Panc1 (cell line): ENCODE measurements at regions of chr5 and their contacts with region 1.

Region 1: DNA sequence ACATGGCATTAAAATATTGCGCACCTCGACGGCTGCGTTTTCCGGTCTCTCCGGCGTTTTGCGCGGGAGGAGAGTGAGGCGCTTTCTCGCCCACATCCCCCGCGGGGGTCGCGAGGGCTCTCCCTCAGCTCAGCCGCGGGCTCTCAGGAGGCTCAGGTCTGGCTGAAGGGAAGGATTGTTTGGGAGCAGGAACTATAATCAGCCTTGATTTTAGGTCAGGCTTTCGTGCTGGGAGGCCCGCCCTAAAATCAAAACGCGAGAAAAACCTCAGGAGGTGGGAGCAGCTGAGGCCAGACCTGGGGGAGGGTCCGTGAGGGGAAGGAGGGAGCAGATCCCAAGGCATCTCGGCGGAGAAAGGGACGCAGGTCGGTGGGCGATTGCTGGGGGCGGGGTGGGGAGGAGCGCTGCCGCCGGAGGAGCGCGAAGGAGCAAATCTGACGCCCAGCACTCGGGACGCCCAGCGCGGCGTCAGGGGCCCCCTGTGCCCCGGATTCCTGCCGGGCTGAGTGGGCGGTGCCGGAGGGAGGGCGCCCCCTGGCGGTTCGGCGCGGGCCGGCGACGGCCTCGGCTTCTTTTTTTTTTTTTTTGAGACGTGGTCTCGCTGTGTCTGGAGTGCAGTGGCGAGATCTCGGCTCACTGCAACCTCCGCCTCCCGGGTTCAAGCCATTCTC is 18.7 kb upstream of the RNF130 start:
- DNase-seq: no peak
- ATAC-seq: peak; percentile 89
- H3K4me3 ChIP-seq: peak overlapping the region; percentile 51 to 69
- H3K27ac ChIP-seq: peak overlapping the region; percentile 75
- H3K4me1 ChIP-seq: peaks cover 6% of the 10 kb centered on the region; the same call in 1 of the 2 replicates
- H3K27me3 ChIP-seq: no peaks in the 10 kb centered on the region
- CTCF ChIP-seq: peak; percentile 97

Region 2: DNA sequence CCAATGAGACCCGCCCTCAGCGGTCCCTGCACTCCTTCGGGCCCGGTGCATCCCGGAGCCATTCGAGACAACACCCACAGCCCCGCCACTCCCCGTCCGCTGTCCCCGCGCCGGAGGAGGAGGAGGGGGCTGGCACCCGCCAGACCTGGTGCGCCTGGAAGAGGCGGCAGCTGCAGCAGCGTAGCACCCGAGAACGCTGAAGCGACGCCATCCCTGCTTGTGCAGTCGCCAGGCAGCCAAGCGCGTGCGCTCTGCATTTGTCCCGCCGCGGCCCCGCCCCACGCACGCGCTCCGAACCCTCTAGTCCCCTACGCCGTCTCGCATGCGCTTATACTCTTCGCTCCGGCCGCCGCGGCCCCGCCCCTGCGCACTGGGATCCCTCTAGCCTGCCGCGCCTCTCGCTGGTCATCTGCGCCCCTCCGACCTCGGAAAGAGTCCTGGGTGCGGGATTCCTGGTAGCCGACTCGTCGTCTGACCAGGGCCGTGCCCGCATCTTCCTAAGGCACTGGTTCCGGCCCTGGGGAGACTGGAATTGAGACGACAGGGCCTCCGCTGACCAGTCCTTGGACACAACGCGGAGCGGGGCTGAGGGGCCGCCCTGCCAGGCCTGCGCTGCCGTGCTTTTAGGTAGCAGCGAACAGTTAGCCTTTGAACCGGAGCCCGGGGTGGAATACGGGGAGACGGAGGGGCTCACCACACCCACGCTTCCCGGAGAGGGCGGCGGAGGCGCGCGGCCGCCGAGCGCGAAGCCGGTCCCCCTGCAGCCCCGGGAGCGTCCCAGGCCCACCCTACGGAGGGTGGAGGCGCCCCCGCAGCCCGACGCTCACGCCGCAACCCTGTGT is 231.4 kb before region 1 on chr5 and contains the start of gene MRNIP:
- CTCF ChIA-PET with region 1: no interaction called
- POLR2A ChIA-PET with region 1: no interaction called
- in situ Hi-C with region 1: no loop called
- intact Hi-C with region 1: loop called (anchors 10 kb)
- DNase-seq: peak; percentile 69
- ATAC-seq: peak; percentile 97
- H3K4me3 ChIP-seq: peak within 1 kb of the TSS; percentile 89 to 97
- H3K27ac ChIP-seq: peak within 1 kb of the TSS; percentile 92
- H3K4me1 ChIP-seq: peaks cover 10% of the 10 kb centered on the region
- H3K27me3 ChIP-seq: no peaks in the 10 kb centered on the region
- CTCF ChIP-seq: no peak
- total RNA-seq, gene MRNIP: 33.0 TPM

Region 3: GRCh38 chr5:180040255-180041214 is 49.7 kb before region 1 on chr5:
- CTCF ChIA-PET with region 1: no interaction called
- POLR2A ChIA-PET with region 1: no interaction called
- in situ Hi-C with region 1: no loop called
- intact Hi-C with region 1: no loop called
- DNase-seq: no peak
- ATAC-seq: peak; percentile 76
- H3K4me3 ChIP-seq: no peak overlapping the region
- H3K27ac ChIP-seq: peak overlapping the region; percentile 52
- H3K4me1 ChIP-seq: peaks cover 21% of the 10 kb centered on the region
- H3K27me3 ChIP-seq: no peaks in the 10 kb centered on the region
- CTCF ChIP-seq: no peak

Region 4: GRCh38 chr5:180627386-180628120 is 537.3 kb after region 1 on chr5:
- CTCF ChIA-PET with region 1: interaction called, 14 read pairs
- POLR2A ChIA-PET with region 1: no interaction called
- in situ Hi-C with region 1: no loop called
- intact Hi-C with region 1: no loop called
- DNase-seq: no peak
- ATAC-seq: no peak
- H3K4me3 ChIP-seq: no peak overlapping the region
- H3K27ac ChIP-seq: no peak overlapping the region
- H3K4me1 ChIP-seq: no peaks in the 10 kb centered on the region
- H3K27me3 ChIP-seq: no peaks in the 10 kb centered on the region
- CTCF ChIP-seq: no peak